ENCODE measurements at regions of chr4 and their contacts with region 1.

Region 1: DNA sequence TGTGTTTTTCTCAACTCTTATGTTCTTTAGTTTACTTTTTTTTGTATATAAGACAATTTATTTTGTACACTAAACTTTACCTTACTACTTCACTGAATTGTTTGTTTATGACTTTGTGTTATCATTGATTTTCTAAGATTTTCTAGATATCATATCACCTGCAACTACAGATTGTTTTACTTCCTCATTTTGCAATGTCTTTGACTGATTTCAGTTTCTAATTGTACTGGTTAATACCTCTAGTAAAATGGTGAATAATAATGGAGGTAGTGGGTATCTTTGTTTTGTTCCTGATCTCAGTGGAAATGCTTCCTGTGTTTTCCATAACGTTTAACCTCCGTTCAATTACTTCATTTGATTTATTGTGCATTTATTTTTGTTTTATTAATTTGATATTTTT is 490.2 kb downstream of the TLL1 start:
- DNase-seq: no peak
- H3K4me3 ChIP-seq: no peak overlapping the region
- H3K27ac ChIP-seq: no peak overlapping the region
- H3K4me1 ChIP-seq: no peaks in the 10 kb centered on the region
- H3K27me3 ChIP-seq: no peaks in the 10 kb centered on the region
- CTCF ChIP-seq: no peak

Region 2: DNA sequence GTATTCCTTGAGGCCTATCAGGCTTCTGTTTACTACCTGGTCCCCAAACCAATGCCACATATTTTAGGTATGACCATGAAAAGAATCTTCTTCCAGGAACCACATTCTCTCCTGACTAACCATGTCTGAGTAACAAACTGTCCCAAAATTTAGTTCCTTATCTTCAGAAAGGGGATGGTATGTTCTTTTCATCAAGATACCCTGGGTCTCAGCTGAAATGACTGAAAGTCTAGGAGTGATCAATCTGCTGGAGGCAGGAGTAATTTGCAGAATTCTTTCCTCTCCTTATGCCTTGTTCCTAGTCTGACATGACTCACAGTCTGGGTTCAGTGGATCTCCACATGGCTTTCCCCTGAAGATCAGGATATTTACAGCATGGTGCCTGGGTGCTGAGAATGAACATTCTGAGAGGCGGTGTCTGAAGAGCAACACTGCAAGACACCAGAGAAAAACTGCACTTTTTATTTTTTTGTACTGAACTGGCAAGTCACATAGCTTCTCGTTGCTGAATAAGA is 175.3 kb after region 1 on chr4:
- CTCF ChIA-PET with region 1: no interaction called
- POLR2A ChIA-PET with region 1: interaction called, 32 read pairs
- intact Hi-C with region 1: no loop called
- DNase-seq: no peak
- H3K4me3 ChIP-seq: no peak overlapping the region
- H3K27ac ChIP-seq: no peak overlapping the region
- H3K4me1 ChIP-seq: peaks cover 6% of the 10 kb centered on the region; the same call in 1 of the 2 replicates
- H3K27me3 ChIP-seq: no peaks in the 10 kb centered on the region
- CTCF ChIP-seq: no peak

Measured in PC-9 (cell line).